Activated CD4-positive, alpha-beta T cell treated with anti-CD3 and anti-CD28 coated beads, Interleukin-2, amount 10 ng/mL, durations not matched to agents 24 days and 14 days (primary cell): ENCODE measurements at regions of chr9 and their contacts with region 1.

Region 1: DNA sequence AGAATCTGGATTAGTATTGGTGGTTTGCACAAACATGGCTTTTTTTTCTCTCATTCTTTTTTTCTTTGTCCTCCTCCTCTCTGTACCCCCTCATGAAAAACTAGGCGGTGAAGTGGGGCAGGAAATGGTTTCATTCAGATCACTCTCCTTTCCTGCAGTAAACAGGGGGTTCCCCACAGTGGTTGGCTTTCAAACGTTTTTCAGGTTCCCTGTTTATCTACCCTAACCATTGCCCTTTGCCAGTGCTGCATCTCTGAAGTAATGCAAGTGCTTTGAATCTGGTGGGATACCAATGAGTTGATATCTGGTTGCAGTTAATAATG is 29.8 kb downstream of the NR4A3 start:
- DNase-seq: peak; percentile 90
- H3K4me3 Mint-ChIP-seq: peak overlapping the region; percentile 49
- H3K27ac Mint-ChIP-seq: peak overlapping the region; percentile 10
- H3K4me1 Mint-ChIP-seq: peaks cover 49% of the 10 kb centered on the region
- H3K27me3 Mint-ChIP-seq: no peaks in the 10 kb centered on the region

Region 2: DNA sequence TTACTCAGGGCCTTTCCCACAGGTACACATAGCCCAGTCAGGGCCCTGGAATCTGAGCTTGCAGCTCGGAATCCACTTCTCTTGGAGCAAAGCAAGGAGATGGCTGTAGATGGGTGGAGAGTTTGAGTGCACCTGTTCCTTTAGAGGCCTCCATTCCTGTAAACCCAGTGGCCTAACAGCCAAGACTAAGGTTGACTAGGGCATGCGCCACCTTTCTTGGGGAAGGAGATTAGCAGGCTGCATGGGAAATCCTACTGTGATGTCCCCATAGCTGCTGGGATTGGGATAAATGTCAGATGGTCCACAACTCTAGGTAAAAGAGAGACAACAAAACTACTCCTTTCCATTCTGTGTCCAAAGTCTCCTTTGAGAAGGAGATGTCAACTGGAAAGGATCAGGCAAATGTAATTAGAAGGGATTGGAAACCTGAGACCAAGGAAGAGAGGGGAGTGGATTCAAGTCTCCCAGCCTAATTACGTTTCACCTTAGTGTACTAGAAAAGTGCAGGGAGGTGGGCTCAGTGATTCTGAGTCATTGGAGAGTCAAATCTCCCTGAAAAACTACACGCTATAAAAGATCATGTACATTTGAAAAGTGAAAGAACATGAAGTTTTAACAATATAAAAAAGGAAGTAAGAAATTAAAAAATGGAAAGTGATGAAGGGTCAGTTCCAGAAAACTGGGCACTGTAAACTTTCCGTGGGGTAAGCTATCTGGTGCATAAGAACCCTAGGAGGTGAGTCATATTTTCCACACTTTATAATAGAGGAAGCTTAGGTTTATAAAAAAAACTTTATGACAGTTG is 525.1 kb before region 1 on chr9:
- intact Hi-C with region 1: no loop called
- DNase-seq: no peak
- H3K4me3 Mint-ChIP-seq: no peak overlapping the region
- H3K27ac Mint-ChIP-seq: peak overlapping the region; percentile 8
- H3K4me1 Mint-ChIP-seq: peaks cover 8% of the 10 kb centered on the region
- H3K27me3 Mint-ChIP-seq: peaks cover 29% of the 10 kb centered on the region

Region 3: DNA sequence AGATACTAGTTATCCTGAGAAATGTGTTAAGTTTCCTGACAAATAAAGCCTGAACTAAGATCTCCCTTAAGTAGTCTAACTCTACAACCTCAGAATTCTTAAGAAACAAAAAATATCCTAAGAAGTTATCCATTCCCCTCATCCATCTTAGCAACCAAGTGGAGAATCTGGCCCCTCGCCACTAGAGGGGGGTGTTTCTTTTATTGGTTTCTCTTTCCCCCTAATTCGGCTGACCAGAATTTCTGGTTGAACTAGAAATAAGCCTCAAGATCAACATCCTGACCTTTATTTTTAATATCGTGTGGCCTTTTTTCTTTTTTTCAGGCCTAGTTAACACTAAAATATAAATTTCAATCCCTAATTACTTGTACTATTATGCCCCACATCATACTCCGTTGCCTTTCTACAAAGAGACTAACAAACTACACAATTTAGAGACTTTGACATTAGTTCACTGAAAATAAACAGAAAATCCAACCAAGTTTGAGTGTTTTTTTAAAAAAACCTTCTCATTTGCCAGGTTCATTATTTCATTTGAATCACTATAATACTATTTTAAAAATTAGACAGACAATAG is 44.1 kb before region 1 on chr9:
- intact Hi-C with region 1: loop called (anchors 1 kb)
- DNase-seq: peak; percentile 89
- H3K4me3 Mint-ChIP-seq: no peak overlapping the region
- H3K27ac Mint-ChIP-seq: no peak overlapping the region
- H3K4me1 Mint-ChIP-seq: peaks cover 23% of the 10 kb centered on the region
- H3K27me3 Mint-ChIP-seq: peaks cover 22% of the 10 kb centered on the region

Region 4: GRCh38 chr9:99825172-99826046 is 26.1 kb before region 1 on chr9:
- intact Hi-C with region 1: loop called (anchors 1 kb)
- DNase-seq: peak; percentile 61
- H3K4me3 Mint-ChIP-seq: peak overlapping the region; percentile 99
- H3K27ac Mint-ChIP-seq: peak overlapping the region; percentile 91
- H3K4me1 Mint-ChIP-seq: peaks cover 60% of the 10 kb centered on the region
- H3K27me3 Mint-ChIP-seq: peaks cover 22% of the 10 kb centered on the region

Region 5: GRCh38 chr9:99868845-99869244 is 17.4 kb after region 1 on chr9:
- intact Hi-C with region 1: loop called (anchors 2 kb)
- DNase-seq: peak; percentile 65
- H3K4me3 Mint-ChIP-seq: no peak overlapping the region
- H3K27ac Mint-ChIP-seq: peak overlapping the region; percentile 42
- H3K4me1 Mint-ChIP-seq: peaks cover 30% of the 10 kb centered on the region
- H3K27me3 Mint-ChIP-seq: no peaks in the 10 kb centered on the region

Region 6: GRCh38 chr9:99998266-99998665 is 146.8 kb after region 1 on chr9:
- intact Hi-C with region 1: no loop called
- DNase-seq: no peak
- H3K4me3 Mint-ChIP-seq: no peak overlapping the region
- H3K27ac Mint-ChIP-seq: no peak overlapping the region
- H3K4me1 Mint-ChIP-seq: no peaks in the 10 kb centered on the region
- H3K27me3 Mint-ChIP-seq: no peaks in the 10 kb centered on the region